ENCODE measurements at regions of chr2 and their contacts with region 1.

Region 1: GRCh38 chr2:24971536-24972314 is at the start of gene DNAJC27:
- DNase-seq: peak; percentile 99
- ATAC-seq: peak; percentile 97
- total RNA-seq, gene DNAJC27: 9.8 TPM

Region 2: GRCh38 chr2:24881158-24882022 is 90.3 kb before region 1 on chr2:
- intact Hi-C with region 1: no loop called
- DNase-seq: no peak
- ATAC-seq: no peak

Region 3: GRCh38 chr2:25131567-25132298 is 160.0 kb after region 1 on chr2:
- intact Hi-C with region 1: loop called (anchors 1 kb)
- DNase-seq: no peak
- ATAC-seq: peak; percentile 37

Region 4: DNA sequence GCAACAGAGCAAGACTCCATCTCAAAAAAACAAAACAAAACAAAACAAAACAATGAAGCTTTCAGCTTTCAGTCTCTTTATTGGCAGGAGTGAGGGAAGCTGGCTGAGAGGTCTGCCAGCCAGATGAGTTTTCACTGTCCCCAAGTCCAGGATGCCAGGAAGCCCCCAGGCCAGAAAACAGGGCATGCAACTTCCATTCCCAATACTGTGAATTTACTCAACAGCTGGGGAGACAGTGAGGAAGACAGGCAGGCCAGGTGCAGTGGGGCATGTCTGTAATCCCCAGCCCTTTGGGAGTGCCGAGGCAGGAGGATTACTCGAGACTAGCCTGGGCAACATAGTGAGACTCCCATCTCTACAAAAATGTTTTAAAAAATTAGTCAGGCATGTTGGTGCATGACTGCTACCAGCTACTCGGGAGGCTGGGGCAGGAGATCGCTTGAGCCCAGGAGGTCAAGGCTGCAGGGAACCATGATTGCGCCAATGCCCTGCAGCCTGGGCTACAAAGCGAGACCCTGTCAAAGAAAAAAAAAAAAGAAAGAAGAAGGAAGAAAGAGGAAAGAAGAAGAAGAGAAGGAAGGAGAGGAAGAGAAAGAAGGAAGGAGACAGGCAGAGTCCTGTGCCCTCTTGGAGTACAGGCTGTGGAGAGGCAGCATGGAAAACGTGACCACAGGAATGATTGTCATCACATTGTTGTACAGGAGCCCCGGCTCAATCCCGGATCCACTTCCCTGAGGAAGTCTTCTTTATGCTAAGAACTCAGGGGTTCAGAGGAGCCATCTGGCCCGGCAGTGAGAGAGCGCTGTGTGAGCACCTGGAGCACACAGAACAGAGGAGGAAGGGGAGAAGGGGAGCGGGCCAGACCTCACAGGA is 225.8 kb after region 1 on chr2:
- intact Hi-C with region 1: loop called (anchors 5 kb)
- DNase-seq: no peak
- ATAC-seq: no peak